ENCODE measurements at regions of chr1 and their contacts with region 1.

Region 1: DNA sequence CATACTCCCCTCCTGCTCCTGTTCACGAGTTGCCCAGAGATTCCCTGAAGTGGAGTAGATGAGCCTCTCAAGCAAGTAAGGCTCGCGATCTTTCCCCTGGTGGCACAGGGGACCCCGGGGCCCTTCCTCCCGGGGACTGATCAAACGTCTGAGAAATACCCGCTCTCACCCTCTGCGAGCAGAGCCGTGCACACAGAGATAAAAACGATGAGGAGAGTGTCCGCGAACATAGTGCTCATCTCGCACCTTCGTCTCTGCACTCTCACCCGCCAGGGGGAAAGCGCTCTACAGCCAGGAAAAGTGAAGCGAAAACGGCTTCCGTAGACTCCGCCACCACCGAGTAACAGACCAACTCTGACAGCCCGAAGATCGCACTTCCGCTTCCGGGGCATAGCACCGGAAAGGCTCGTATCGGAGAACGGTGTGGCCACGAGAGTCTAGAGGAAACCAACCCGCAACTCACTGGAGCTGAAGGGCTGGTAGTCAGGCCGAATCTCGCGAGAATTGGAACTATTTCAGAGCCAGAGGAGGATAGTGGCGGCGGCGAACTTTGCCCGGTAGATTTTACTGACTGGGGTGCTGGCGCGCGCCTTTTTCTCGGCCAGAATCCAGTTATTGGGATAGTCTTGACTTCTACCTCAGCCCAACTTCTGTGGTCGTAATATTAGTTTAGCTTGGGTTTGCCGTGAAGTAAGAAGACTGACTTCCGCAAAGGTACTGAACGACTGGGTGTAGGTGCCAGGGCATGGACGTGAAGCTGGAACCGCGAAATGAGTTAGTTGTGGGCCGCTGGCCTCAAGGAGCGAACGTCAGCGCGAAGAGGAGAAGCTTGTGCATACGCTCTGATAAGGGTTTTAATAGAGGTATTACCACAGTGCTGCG is at the start of gene TMCO1:
- DNase-seq: peak; percentile 88 to 96
- ATAC-seq: peak; percentile 99 to 100 (median 100)
- H3K4me3 ChIP-seq: peak within 1 kb of the TSS; percentile 45 to 99 (median 77)
- H3K27ac ChIP-seq: peak within 1 kb of the TSS; percentile 18 to 95 (median 89)
- H3K4me1 ChIP-seq: peaks cover 0 to 61% (median 31%) of the 10 kb centered on the region in 9 donors
- H3K27me3 ChIP-seq: no peaks in the 10 kb centered on the region
- CTCF ChIP-seq: peak in 6 of 9 donors; percentile 14 to 45 (median 34)
- total RNA-seq, gene TMCO1: 41.1 to 61.3 (median 48.4) TPM

Region 2: DNA sequence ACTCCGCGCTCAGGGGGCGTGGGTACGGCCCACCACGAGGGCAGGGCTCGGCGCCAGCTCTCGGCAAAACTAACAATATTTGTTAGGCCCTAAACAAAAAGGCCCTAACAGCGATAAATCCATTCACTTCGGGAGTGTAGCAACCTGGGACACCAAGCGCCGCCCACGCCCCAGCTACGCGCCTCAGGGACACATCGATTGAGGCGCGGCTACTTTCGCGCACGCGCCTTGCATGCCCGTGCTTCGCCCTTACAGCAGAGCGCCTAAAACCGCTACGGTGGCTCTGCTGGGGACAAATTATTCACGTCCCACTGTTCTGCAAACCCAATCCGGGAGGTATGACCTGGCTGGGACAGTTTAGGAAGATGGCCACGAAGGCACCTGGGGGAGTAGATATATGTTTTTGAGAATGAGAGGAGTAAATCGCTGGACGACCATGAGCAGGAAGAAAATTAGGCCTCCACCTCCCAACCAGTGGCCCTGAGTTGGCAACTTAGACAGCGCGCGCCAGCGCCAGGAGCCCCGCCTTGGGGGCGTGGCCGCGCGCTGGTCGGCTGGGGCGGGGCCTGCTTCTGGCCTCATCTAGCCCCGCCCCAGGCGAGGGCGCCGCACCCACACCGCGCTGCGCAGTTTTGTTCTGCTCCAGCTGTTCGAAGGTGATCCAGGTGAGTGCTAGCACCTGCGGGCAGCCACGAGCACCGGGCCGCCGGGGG is 138.0 kb before region 1 on chr1 and contains the start of gene MGST3:
- intact Hi-C with region 1: loop called in 1 of 10 experiments (anchors 10 kb)
- DNase-seq: peak; percentile 94 to 97
- ATAC-seq: peak; percentile 97 to 99 (median 98)
- H3K4me3 ChIP-seq: peak within 1 kb of the TSS; percentile 66 to 96 (median 81)
- H3K27ac ChIP-seq: peak within 1 kb of the TSS; percentile 87 to 97 (median 92)
- H3K4me1 ChIP-seq: peaks cover 0 to 47% (median 35%) of the 10 kb centered on the region in 9 donors
- H3K27me3 ChIP-seq: no peaks in the 10 kb centered on the region
- CTCF ChIP-seq: no peak
- total RNA-seq, gene MGST3: 545 to 1,002 (median 844) TPM

Region 3: GRCh38 chr1:165827268-165828102 is 58.7 kb after region 1 on chr1 and contains the start of gene UCK2:
- intact Hi-C with region 1: loop called in 4 of 10 experiments (anchors 2 to 10 kb)
- DNase-seq: peak; percentile 67 to 78
- ATAC-seq: peak; percentile 88 to 96 (median 93)
- H3K4me3 ChIP-seq: peak within 1 kb of the TSS; percentile 68 to 92 (median 78)
- H3K27ac ChIP-seq: peak within 1 kb of the TSS; percentile 25 to 95 (median 91)
- H3K4me1 ChIP-seq: peaks cover 0 to 20% (median 15%) of the 10 kb centered on the region in 9 donors
- H3K27me3 ChIP-seq: no peaks in the 10 kb centered on the region
- CTCF ChIP-seq: peak in 3 of 9 donors; percentile 10 to 39 (median 22)
- total RNA-seq, gene UCK2: 7.3 to 22.0 (median 11.3) TPM

Region 4: DNA sequence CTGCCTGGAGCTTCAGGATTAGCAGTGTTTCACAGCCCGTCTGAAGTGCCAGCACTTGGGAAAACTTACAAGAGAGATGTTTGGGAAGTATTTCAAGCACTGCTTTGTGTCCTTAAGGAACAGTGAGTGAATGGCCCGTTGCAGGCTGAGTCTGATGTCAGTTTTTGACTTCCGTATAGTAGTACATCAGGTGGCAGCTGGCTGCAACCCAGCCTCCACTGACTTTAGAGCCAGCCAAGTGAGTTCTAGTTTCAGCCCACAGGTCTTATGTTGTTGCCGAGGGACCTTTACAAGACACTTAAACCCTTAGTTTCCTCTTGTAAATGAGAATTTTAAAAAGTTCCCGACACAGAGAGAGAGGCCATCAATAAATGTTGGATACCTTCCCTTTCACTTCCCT is 93.7 kb after region 1 on chr1:
- intact Hi-C with region 1: no loop called
- DNase-seq: no peak
- ATAC-seq: peak in 5 of 8 donors; percentile 34 to 57 (median 43)
- H3K4me3 ChIP-seq: no peak overlapping the region
- H3K27ac ChIP-seq: no peak overlapping the region
- H3K4me1 ChIP-seq: peaks cover 0 to 38% (median 26%) of the 10 kb centered on the region in 9 donors
- H3K27me3 ChIP-seq: no peaks in the 10 kb centered on the region
- CTCF ChIP-seq: no peak

Measured in heart right ventricle (tissue), 16 donors.